Activated CD4-positive, alpha-beta T cell treated with anti-CD3 and anti-CD28 coated beads, Interleukin-2, amount 10 ng/mL, durations not matched to agents 24 days and 14 days (primary cell): ENCODE measurements at regions of chr3 and their contacts with region 1.

Region 1: GRCh38 chr3:50568947-50569749 is at the start of gene HEMK1:
- DNase-seq: peak; percentile 98
- H3K4me3 Mint-ChIP-seq: peak within 1 kb of the TSS; percentile 98
- H3K27ac Mint-ChIP-seq: peak within 1 kb of the TSS; percentile 99
- H3K4me1 Mint-ChIP-seq: peaks cover 68% of the 10 kb centered on the region
- H3K27me3 Mint-ChIP-seq: no peaks in the 10 kb centered on the region
- total RNA-seq, gene HEMK1: 62.9 and 66.0 TPM in 2 replicates

Region 2: DNA sequence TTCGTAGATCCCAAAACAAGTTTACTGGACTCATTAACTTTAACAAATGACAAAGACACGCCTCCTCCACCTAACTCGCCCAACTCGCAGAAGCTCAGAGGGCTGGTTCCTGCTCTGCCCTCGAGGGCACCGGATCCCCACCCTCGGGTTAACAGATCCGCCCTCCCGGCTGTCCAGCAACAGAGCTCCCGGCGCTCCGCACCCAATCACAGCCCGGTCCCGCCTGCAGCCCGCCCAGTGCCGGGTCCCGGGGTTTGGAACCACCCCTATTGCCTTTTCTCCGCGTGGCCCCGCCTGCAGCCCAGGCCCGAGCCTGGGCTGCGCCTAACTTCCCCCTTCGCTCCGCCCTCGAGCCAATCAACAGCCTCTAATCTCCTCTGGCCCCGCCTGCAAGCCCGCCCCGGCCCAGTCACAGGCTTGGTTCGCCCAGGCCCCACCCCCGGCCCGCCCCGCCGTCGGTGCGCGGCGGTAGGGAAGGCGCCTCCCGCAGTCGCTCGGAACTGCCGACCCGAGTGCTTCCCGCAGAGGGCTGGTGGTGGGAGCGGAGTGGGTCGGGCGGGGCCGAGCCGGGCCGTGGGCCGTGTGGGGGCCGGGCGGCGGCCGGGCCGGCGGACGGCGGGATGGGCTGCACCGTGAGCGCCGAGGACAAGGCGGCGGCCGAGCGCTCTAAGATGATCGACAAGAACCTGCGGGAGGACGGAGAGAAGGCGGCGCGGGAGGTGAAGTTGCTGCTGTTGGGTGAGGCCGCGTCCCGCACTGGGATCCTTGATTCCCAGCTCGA is 333.2 kb before region 1 on chr3 and contains the start of gene GNAI2:
- intact Hi-C with region 1: loop called (anchors 5 kb)
- DNase-seq: peak; percentile 100
- H3K4me3 Mint-ChIP-seq: peak within 1 kb of the TSS; percentile 99
- H3K27ac Mint-ChIP-seq: peak within 1 kb of the TSS; percentile 94
- H3K4me1 Mint-ChIP-seq: peaks cover 31% of the 10 kb centered on the region
- H3K27me3 Mint-ChIP-seq: no peaks in the 10 kb centered on the region
- total RNA-seq, gene GNAI2: 225 and 232 TPM in 2 replicates

Region 3: GRCh38 chr3:50350527-50351322 is 218.4 kb before region 1 on chr3 and contains the starts of genes CYB561D2 and NPRL2:
- intact Hi-C with region 1: loop called (anchors 2 kb)
- DNase-seq: peak; percentile 100
- H3K4me3 Mint-ChIP-seq: peak within 1 kb of the TSS; percentile 95
- H3K27ac Mint-ChIP-seq: peak within 1 kb of the TSS; percentile 97
- H3K4me1 Mint-ChIP-seq: peaks cover 40% of the 10 kb centered on the region
- H3K27me3 Mint-ChIP-seq: no peaks in the 10 kb centered on the region
- total RNA-seq, gene CYB561D2: 23.9 and 27.0 TPM in 2 replicates
- total RNA-seq, gene NPRL2: 38.1 and 43.0 TPM in 2 replicates

Region 4: DNA sequence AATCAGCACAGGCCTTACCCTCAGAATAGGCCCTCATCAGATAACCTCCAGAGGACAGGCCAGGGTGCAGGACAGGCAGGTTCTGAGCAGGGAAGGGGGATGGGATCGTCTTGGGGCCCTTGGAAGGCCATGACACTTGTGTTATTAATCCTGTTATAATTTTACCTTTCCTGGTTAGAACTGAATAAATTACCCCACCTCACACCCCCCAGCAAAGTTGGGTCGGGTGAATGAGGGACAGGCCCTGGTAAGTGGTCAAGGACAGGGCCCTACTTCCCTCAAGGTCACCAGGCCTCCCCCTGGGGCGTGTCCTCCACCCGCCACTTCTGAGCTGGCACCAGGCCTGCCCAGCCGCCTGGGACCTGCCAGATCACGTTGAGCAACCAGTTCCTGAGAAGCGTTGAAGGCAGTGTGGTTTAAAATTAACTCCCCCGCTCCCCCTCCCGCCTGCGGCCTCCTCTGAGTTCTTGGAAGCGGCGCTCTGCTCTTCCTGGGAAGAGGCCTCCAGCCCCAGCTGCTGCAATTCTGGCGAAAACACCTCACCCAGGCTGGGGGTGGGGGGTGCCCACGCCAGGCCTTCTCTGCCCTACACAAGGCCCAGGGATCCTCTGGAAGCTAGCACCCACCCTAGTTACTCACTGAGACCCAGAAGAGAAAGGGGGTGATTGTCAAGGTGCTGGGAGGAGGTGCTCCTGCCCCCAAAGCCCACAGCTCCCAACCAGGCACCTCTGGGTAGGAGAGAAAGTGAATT is 31.9 kb after region 1 on chr3:
- intact Hi-C with region 1: loop called (anchors 1 kb)
- DNase-seq: peak; percentile 95
- H3K4me3 Mint-ChIP-seq: peak overlapping the region; percentile 93
- H3K27ac Mint-ChIP-seq: peak overlapping the region; percentile 98
- H3K4me1 Mint-ChIP-seq: peaks cover 74% of the 10 kb centered on the region
- H3K27me3 Mint-ChIP-seq: no peaks in the 10 kb centered on the region

Region 5: DNA sequence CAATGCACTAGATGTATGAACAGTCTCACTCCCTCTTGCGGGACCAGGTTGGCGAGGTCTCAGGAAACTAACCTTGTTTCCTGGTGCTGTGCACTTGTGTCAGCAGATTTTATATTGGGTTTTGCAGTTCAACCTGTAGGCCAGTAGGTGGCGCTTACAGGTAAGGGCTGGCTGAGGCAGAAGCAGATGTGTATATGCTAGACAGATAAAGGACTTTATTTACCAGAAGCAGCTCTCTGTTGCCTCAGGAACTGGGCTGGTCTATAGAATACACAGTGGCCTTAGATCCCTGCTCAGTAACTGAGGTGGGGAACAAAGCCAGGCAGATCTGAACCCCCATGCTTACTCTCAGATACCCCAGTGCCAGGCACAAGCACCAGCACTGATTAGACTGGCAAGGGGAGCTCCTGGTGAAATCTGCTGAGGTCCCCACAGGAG is 402.4 kb after region 1 on chr3:
- intact Hi-C with region 1: loop called (anchors 5 kb)
- DNase-seq: peak; percentile 89
- H3K4me3 Mint-ChIP-seq: no peak overlapping the region
- H3K27ac Mint-ChIP-seq: no peak overlapping the region
- H3K4me1 Mint-ChIP-seq: peaks cover 12% of the 10 kb centered on the region
- H3K27me3 Mint-ChIP-seq: peaks cover 3% of the 10 kb centered on the region

Region 6: DNA sequence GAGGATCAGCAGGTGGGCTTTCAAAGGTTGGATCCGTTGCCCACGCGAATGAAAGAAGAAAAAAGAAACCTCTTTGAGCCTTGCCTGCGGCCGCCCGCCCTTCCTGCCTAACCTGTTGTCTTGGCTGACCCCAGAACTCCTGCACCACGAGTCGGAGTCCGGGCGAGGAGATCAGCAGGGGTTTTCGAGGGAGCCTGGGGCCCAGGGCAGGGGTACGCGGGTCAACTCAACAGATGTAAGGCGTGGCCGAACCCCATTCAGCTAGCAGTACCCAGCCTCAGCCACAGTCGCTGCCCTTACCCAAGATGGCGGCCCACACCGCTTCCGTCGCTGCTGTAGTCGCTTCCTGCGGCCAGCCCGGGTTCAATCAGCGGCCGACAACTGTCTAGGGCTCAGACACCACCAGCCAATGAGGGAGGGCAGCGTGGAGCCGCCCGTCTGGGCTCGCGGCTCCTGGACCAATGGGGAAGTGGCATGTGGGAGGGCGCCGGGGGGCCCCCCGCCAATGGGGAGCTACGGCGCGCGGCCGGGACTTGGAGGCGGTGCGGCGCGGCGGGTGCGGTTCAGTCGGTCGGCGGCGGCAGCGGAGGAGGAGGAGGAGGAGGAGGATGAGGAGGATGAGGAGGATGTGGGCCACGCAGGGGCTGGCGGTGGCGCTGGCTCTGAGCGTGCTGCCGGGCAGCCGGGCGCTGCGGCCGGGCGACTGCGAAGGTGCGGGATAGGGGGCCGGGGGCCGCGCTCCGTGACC is 815.8 kb after region 1 on chr3 and contains the start of gene MANF:
- intact Hi-C with region 1: loop called (anchors 2 kb)
- DNase-seq: peak; percentile 99
- H3K4me3 Mint-ChIP-seq: peak within 1 kb of the TSS; percentile 95
- H3K27ac Mint-ChIP-seq: peak within 1 kb of the TSS; percentile 99
- H3K4me1 Mint-ChIP-seq: peaks cover 40% of the 10 kb centered on the region
- H3K27me3 Mint-ChIP-seq: no peaks in the 10 kb centered on the region
- total RNA-seq, gene MANF: 218 and 229 TPM in 2 replicates